Adrenal gland (tissue), 19 donors: ENCODE measurements at regions of chr2 and their contacts with region 1.

Region 1: GRCh38 chr2:219218732-219219701 is at the start of gene ABCB6:
- DNase-seq: peak; percentile 97 to 99 (median 99)
- H3K4me3 ChIP-seq: peak within 1 kb of the TSS in 2 of 4 donors; percentile 46 to 69
- H3K27ac ChIP-seq: peak within 1 kb of the TSS; percentile 82 to 97 (median 92)
- H3K4me1 ChIP-seq: peaks cover 23 to 30% of the 10 kb centered on the region in 2 donors
- H3K27me3 ChIP-seq: no peaks in the 10 kb centered on the region
- CTCF ChIP-seq: no peak
- POLR2A ChIP-seq: peak; percentile 62 to 69
- total RNA-seq, gene ABCB6: 10.1 to 85.1 (median 26.8) TPM

Region 2: GRCh38 chr2:219160186-219161017 is 58.6 kb before region 1 on chr2 and contains the start of gene NHEJ1:
- intact Hi-C with region 1: loop called in 1 of 2 experiments (anchors 10 kb)
- DNase-seq: peak; percentile 97 to 99 (median 98)
- H3K4me3 ChIP-seq: peak within 1 kb of the TSS; percentile 33 to 73 (median 52)
- H3K27ac ChIP-seq: peak within 1 kb of the TSS; percentile 83 to 96 (median 90)
- H3K4me1 ChIP-seq: peaks cover 7 to 9% of the 10 kb centered on the region in 2 donors
- H3K27me3 ChIP-seq: no peaks in the 10 kb centered on the region
- CTCF ChIP-seq: peak; percentile 92 to 99 (median 96)
- POLR2A ChIP-seq: peak; percentile 44 to 65
- total RNA-seq, gene NHEJ1: 11.9 to 22.9 (median 17.8) TPM